ENCODE measurements at regions of chr15 and their contacts with region 1.

Region 1: DNA sequence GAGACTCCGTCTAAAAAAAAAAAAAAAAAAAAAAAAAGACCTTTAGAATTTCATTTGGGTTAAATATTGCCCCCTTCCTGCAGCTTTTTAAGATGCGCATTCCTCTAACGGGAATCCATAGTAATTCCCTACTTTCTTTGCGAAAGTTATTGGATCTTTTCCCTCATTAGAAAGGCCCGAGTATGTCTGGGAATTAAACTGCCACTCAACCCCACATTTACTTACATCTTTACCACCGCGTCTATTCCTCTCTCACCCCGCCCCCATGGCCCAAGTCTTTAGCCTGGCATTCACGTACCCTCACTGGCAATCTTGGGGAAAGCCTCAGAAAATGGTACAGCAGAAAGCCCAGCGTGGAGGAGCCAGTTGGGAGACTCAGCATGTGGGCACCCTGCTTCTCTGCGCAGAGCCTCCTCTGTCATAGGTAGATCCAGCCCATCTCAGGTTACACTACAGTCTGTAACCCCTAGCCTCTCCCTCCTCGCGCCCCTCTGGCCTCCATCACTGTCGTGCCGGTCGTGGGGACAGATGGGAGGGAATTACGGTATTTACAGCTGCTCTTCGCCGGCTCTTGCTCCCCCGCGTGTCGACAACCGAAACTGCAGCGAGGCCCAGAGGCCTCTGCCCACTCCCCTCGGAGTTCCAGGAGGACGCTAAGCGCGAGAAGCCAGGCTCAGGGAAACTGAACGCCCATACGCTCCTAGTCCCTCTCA is 6.4 kb upstream of the ANKDD1A start:
- DNase-seq: peak; percentile 95
- ATAC-seq: peak; percentile 99
- H3K4me3 Mint-ChIP-seq: peak overlapping the region; percentile 71
- H3K27ac Mint-ChIP-seq: peak overlapping the region; percentile 99
- H3K4me1 Mint-ChIP-seq: peaks cover 16% of the 10 kb centered on the region
- H3K27me3 Mint-ChIP-seq: peaks cover 21% of the 10 kb centered on the region
- CTCF ChIP-seq: peak; percentile 64

Region 2: DNA sequence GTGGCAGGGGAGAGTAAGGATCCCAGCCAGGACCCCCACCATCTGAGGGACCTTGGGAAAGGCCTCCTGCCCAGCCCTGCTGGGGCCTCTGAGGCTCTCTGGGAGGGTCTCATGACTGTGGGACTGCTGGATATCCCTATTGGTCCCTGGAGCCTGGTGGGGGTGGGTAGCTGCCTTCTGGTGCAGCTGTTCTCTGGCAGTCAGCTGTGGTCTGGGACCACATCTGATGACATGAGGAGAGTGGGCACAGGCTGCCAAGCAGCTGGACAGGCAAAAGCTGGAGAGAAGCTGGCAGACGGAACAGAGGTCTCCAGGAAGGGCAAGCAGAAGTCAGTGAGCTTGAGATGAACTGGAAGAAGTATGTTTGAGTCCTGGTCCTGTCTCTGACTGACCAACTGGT is 41.2 kb before region 1 on chr15:
- CTCF ChIA-PET with region 1: interaction called, 10 read pairs
- POLR2A ChIA-PET with region 1: no interaction called
- DNase-seq: no peak
- ATAC-seq: no peak
- H3K4me3 Mint-ChIP-seq: no peak overlapping the region
- H3K27ac Mint-ChIP-seq: peak overlapping the region; percentile 74; the same call in 1 of the 2 replicates
- H3K4me1 Mint-ChIP-seq: peaks cover 43% of the 10 kb centered on the region
- H3K27me3 Mint-ChIP-seq: no peaks in the 10 kb centered on the region
- CTCF ChIP-seq: no peak

Region 3: DNA sequence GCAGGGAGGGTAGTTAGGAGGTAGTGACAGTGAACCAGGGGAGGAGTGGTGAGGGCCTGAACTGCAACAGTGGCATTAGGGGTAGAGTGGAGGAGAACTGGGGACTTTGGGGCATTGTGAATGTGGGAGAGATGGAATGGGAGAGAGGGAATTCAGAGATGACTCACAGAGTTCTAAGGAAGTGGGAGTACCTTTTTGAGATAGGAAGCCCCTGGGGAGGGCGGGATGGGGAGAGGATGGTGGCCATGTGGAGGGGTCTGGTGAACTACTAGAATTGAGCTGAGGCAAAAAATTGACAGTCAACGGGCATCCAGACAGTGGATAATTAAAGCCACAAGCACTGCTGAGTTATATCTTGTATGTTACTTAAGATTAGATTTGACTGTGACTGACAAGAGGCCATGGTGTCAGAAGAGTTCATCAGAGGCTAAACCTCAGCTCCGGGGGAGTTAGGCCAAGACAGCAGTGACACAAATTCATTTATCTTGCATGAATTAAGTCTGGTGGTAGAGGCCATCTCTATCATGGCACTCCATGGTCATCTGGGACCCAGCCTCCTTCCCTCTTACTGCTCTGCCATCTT is 29.5 kb before region 1 on chr15:
- CTCF ChIA-PET with region 1: interaction called, 12 read pairs
- POLR2A ChIA-PET with region 1: interaction called, 4 read pairs
- DNase-seq: no peak
- ATAC-seq: no peak
- H3K4me3 Mint-ChIP-seq: no peak overlapping the region
- H3K27ac Mint-ChIP-seq: no peak overlapping the region
- H3K4me1 Mint-ChIP-seq: peaks cover 25% of the 10 kb centered on the region
- H3K27me3 Mint-ChIP-seq: no peaks in the 10 kb centered on the region
- CTCF ChIP-seq: no peak

Region 4: DNA sequence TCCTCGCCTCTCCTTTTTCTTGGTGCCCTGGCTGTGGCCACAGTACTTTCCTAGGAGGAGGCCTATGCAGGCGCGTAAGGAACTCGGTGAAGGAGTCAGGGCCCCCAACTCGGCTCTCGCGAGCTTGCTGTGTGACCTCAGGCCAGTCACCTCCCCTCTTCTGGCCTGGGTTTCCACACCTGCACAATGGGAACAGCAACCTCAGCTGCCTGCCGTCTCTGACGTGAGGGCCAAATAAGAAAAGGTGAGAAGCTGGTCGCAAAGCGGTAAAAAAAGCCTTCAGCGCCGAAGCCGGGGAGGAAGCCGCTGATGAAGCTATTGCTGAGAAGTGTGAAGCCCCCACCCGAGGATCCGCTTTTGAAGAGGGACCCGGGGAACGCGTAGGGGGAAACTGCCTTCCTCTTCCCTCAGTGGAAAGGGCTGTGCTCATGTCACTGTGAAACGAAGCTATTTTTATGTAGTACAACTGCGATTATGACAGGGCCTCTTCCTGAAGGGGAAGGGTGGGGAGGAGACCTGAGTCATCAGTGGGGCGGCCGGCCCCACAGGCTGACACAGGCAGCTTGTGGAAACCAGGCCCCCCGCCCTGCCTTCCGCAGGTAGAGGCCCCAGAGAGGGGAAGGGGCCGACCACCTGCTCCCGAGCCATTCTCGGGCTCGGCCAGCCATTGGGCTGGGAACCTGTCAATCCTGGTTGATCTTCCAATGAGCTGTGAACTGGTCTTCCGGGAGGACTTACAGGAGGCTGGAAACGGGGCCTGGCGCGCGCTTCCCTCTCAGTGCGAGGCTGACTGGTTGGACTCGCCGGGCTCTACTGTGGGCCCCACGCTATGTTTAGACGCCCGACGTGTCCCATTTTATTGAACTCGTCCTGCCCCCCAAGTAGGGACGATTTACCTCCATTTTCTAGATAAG is 11.5 kb before region 1 on chr15:
- CTCF ChIA-PET with region 1: interaction called, 12 read pairs
- POLR2A ChIA-PET with region 1: interaction called, 8 read pairs
- DNase-seq: peak; percentile 97
- ATAC-seq: peak; percentile 91
- H3K4me3 Mint-ChIP-seq: peak overlapping the region; percentile 75
- H3K27ac Mint-ChIP-seq: peak overlapping the region; percentile 93
- H3K4me1 Mint-ChIP-seq: peaks cover 51% of the 10 kb centered on the region
- H3K27me3 Mint-ChIP-seq: no peaks in the 10 kb centered on the region
- CTCF ChIP-seq: no peak

Region 5: DNA sequence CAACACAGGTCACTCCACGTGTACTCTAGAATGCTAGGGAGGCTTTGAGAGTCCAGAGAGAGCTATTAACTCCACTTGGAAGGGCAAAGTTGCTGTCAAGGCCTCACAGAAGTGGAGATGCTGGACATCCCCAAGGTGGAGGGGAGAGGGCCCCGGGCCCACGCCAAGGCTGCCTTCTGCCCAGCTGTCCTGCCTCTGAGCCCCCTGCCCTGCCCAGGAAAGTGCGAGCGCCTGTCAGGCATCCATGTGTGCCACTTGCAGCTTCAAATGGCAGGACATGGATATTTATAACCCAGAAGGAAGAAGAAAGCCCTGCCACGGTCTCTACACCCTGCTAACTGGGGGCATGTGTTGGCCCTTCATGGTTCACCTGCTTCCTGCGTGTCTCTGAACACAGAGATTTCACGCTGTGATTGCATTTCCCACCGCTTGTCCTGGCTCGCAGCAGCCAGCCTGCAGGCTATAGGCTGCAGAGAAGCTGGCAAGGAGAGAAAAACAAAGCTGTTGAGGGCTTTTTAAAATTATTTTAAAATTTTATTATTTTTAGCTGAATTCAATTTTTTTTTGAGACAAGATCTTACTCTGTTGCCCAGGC is 23.4 kb after region 1 on chr15:
- CTCF ChIA-PET with region 1: interaction called, 10 read pairs
- POLR2A ChIA-PET with region 1: no interaction called
- DNase-seq: no peak
- ATAC-seq: no peak
- H3K4me3 Mint-ChIP-seq: no peak overlapping the region
- H3K27ac Mint-ChIP-seq: no peak overlapping the region
- H3K4me1 Mint-ChIP-seq: peaks cover 3% of the 10 kb centered on the region
- H3K27me3 Mint-ChIP-seq: no peaks in the 10 kb centered on the region
- CTCF ChIP-seq: no peak

Region 6: GRCh38 chr15:64982472-64982871 is 77.2 kb after region 1 on chr15:
- CTCF ChIA-PET with region 1: no interaction called
- POLR2A ChIA-PET with region 1: no interaction called
- DNase-seq: no peak
- ATAC-seq: no peak
- H3K4me3 Mint-ChIP-seq: no peak overlapping the region
- H3K27ac Mint-ChIP-seq: no peak overlapping the region
- H3K4me1 Mint-ChIP-seq: peaks cover 28% of the 10 kb centered on the region
- H3K27me3 Mint-ChIP-seq: no peaks in the 10 kb centered on the region
- CTCF ChIP-seq: no peak

Region 7: DNA sequence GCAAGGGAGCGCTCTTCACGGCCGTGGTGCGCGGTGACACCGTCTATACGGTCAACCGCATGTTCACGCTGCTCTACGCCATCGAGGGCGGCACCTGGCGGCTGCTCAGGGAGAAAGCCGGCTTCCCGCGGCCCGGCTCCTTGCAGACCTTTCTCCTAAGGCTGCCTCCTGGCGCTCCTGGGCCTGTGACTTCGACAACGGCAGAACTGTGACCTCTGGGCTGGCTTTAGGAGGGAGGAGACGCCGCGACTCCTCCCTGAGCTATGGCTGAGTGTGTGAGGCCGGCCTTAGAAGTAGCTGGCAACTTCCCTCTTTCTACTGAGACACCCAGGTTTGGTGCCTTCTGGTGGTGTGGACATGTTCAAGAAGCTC is 172.7 kb after region 1 on chr15:
- CTCF ChIA-PET with region 1: no interaction called
- POLR2A ChIA-PET with region 1: no interaction called
- DNase-seq: peak; percentile 86
- ATAC-seq: peak; percentile 75
- H3K4me3 Mint-ChIP-seq: no peak overlapping the region
- H3K27ac Mint-ChIP-seq: no peak overlapping the region
- H3K4me1 Mint-ChIP-seq: peaks cover 32% of the 10 kb centered on the region
- H3K27me3 Mint-ChIP-seq: peaks cover 12% of the 10 kb centered on the region
- CTCF ChIP-seq: no peak